Activated CD4-positive, alpha-beta T cell treated with anti-CD3 and anti-CD28 coated beads, Interleukin-2, amount 10 ng/mL, durations not matched to agents 24 days and 14 days (primary cell): ENCODE measurements at regions of chr9 and their contacts with region 1.

Region 1: DNA sequence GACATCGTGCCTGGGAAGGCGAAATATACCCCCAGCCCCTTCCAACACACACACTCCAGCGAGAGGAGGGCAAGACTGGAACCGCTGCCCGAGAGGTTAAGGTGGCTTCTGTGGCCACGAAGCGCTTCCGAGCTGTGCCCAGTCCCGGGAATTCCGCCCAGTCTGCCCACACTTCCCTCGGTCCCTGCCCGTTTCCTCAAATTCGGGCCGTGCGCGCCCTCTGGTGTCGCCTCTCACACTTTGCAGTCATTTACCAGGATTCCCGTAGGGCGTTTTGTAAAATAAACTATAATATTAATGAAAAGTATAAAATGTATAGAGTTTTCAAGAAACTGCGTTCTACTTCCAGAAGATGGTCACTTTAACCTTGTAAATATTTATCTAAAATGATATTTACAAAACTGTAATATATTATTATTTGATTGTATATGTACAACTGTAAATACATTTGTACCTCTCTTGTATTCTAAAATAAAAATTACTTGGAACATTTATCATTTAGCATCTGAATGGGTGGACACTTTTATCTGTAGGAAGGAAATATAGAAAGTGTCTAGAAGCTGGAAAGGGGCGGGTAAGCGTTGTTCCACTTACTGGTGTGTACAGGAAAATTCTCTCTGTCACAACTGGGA is 11.0 kb upstream of the EXOSC2 start:
- DNase-seq: peak; percentile 86
- H3K4me3 Mint-ChIP-seq: peak overlapping the region; percentile 97
- H3K27ac Mint-ChIP-seq: peak overlapping the region; percentile 90
- H3K4me1 Mint-ChIP-seq: peaks cover 10% of the 10 kb centered on the region
- H3K27me3 Mint-ChIP-seq: peaks cover 25% of the 10 kb centered on the region

Region 2: DNA sequence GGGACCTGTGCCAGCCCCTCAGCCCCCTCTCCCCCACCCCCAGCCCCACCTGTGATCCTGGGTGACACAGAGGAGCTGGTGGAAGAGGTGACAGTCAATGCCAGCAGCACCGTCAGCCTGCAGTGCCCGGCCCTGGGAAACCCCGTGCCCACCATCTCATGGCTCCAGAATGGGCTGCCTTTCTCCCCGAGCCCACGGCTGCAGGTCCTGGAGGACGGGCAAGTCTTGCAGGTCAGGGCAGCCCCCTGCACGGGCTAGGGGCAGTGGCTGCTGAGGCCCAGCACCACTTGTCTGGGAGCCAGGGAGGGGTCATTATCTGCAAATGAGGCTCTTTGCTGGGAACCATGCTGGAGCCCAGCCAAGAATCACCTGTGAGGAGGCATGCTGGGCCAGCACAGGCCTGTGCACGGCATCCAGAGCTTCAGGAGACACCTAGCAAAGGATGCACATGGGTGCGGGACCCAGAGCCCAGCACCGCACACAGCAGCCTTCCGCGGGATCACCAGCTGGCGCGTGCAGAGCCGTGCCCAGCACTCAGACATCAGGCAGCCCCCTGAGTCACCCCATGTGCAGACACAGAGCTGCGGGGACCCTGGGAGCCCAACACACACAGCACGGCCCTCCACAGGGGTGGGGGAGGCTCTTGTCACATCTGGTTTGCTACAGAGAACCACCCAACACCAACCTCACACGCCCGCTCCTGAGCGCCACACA is 299.8 kb before region 1 on chr9:
- intact Hi-C with region 1: no loop called
- DNase-seq: no peak
- H3K4me3 Mint-ChIP-seq: no peak overlapping the region
- H3K27ac Mint-ChIP-seq: no peak overlapping the region
- H3K4me1 Mint-ChIP-seq: no peaks in the 10 kb centered on the region
- H3K27me3 Mint-ChIP-seq: no peaks in the 10 kb centered on the region

Region 3: DNA sequence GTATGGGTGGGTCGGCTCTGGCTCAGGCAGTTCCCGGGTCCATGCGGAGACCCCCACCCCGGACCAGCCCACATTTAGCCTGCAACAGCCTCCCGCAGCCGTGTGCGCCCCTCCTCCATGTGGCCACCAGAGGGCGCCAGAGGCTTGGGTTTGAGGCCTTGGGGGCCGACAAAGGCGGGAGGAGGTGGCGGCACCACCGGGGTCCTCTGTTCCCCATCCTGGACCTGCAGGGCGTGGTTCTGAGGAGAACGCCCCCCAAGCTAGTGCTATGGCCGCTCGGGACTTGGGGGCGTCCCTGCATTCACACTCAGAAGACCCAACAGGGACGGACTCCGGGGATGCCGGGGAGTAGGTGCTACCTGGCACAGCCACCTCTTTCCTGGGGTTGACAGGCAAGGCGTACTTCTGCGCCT is 221.4 kb before region 1 on chr9:
- intact Hi-C with region 1: loop called (anchors 1 kb)
- DNase-seq: peak; percentile 91
- H3K4me3 Mint-ChIP-seq: no peak overlapping the region
- H3K27ac Mint-ChIP-seq: no peak overlapping the region
- H3K4me1 Mint-ChIP-seq: no peaks in the 10 kb centered on the region
- H3K27me3 Mint-ChIP-seq: peaks cover 6% of the 10 kb centered on the region

Region 4: DNA sequence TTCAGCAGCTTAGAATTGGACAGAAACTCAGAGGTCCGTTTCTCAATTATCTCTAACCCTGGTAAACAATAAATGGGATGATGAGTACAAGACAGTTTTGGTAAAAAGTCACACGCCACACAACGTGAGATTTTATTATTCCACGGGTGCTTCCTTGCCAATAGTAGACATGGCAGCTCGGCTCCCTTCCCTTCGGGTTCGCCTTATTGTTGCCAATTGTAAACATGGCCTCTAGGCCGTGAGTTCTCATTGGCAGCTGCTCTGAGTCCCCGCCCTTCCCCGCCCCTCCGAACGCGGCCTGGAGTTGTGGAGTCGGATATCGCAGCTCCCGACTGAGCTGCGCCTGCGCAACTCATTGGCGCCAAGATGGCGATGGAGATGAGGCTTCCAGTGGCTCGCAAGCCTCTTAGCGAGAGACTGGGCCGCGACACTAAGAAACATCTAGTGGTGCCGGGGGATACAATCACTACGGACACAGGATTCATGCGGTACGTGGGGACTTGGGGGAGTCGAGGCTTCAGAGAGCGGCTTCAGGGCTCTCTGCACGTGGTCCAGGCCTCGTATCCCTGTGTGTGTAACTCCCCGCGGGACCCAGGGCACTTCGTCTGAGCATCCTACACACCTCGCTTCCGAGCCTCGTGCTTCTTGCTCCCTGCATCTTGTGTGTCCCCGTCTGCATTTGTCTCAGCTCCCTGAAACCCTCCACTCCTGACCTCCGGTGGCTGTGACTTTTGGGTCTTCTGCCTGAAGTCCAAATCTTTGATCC is 11.0 kb after region 1 on chr9 and contains the start of gene EXOSC2:
- intact Hi-C with region 1: loop called (anchors 1 kb)
- DNase-seq: peak; percentile 97
- H3K4me3 Mint-ChIP-seq: peak within 1 kb of the TSS; percentile 89
- H3K27ac Mint-ChIP-seq: peak within 1 kb of the TSS; percentile 93
- H3K4me1 Mint-ChIP-seq: peaks cover 37% of the 10 kb centered on the region
- H3K27me3 Mint-ChIP-seq: no peaks in the 10 kb centered on the region
- total RNA-seq, gene EXOSC2: 109 and 110 TPM in 2 replicates

Region 5: DNA sequence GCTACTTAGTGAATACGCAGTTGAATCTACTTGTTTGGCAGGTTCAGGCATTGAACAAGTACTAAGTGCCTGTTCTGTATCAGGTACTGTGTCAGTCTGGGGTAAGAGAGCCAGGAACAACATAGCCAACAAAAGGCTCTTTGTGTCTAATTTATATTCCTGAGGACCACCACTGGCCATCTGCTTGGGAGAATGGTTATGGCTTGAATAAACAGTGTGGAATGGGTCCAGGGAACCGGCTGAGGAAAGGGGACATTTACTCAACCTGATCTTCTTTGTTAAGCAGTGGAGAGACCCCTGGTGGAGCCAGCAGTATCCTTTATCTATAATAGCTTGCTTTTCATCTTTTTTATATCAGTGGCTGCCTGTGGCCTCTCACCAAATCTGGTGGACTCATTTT is 49.5 kb after region 1 on chr9:
- intact Hi-C with region 1: no loop called
- DNase-seq: no peak
- H3K4me3 Mint-ChIP-seq: no peak overlapping the region
- H3K27ac Mint-ChIP-seq: no peak overlapping the region
- H3K4me1 Mint-ChIP-seq: peaks cover 9% of the 10 kb centered on the region
- H3K27me3 Mint-ChIP-seq: no peaks in the 10 kb centered on the region

Region 6: DNA sequence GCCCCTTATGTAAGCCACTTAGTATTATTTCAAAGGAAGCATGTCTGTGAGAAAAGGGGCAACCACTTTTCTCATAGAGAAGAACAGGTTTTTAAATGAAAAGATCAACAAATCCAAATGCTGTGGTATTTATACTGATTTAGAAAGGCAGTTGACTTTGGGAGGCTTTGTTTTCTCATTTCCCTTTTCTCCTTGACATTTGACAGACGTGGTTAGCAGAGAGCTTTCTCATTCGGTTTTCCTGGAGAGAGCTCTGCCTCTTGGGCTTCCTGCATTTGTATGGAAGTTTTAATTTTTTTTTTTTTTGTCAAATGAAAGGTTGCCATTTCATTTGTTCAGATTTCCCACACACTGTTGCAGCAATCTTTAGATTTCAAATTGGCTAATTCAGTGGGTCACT is 73.4 kb after region 1 on chr9:
- intact Hi-C with region 1: no loop called
- DNase-seq: no peak
- H3K4me3 Mint-ChIP-seq: no peak overlapping the region
- H3K27ac Mint-ChIP-seq: no peak overlapping the region
- H3K4me1 Mint-ChIP-seq: no peaks in the 10 kb centered on the region
- H3K27me3 Mint-ChIP-seq: no peaks in the 10 kb centered on the region

Region 7: DNA sequence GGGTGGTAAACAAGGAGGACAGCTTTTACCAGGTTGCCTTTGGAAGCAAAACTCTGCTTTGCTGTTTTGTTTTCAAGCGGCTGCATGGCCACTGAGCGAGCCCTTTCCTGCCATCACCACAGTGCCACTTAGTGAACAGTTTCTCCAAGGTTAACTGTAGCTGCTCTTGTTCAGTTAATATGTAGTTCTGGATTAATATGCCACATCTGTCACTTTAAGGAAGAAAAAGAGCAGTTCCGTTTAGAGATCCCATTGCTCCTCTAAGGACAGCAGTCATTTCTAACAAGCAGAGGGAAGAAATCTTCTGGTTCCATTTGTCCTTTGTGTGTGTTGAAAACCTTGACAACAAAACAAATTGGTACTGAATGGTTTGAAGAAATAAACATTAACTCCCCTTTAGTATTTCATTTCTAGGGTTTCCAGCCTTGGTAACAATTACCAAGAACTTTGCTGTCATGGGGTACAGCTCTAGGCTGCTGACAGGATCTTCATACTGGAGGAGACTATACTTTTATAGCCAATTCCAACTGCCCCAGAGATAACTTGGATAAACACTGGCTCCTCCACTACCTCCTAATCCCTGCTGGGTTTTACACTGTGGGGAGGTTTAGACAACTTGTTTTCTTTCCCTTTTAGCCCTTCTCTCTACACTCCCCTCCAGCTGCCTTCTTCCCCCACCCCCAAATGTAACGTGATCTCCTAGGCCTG is 142.2 kb after region 1 on chr9:
- intact Hi-C with region 1: no loop called
- DNase-seq: no peak
- H3K4me3 Mint-ChIP-seq: no peak overlapping the region
- H3K27ac Mint-ChIP-seq: no peak overlapping the region
- H3K4me1 Mint-ChIP-seq: no peaks in the 10 kb centered on the region
- H3K27me3 Mint-ChIP-seq: no peaks in the 10 kb centered on the region